Breast epithelium (tissue), 4 donors: ENCODE measurements at regions of chr19 and their contacts with region 1.

Region 1: DNA sequence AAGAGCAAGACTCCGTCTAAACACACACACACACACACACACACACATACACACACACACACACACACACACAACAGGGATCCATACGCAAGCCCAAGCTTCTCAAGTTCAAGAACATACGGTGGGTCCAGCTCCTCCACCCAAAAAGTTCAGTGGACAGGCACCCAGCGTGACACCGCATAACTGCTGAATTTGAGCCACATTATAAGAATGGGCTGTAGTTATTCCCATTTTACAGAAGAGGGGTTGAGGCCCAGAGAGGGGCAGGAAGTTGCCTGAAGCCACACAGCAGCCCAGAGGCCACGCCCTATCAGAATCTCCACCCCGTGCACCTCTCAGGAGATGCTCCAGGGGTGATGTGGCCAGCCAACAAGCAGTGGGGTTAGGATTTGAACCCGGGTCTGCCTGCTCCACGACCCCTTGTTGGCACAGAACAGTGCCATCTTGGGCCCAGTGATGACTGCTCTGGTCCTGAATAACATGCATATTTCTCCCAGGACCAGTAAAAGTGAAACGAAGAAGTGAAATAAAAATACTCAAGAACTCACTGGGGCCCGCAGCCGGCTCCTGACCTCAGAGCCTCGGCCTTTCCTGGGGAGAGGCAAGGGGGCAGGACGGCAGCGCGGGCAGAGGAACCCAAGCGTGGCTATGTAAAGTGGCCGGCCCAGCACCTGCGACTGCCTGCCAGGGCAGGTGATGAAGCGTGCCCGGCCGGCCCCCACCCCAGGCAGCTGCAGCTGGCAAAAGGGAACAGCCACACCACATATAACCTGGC is 61.9 kb downstream of the AP1M1 start:
- DNase-seq: no peak
- H3K4me3 ChIP-seq: no peak overlapping the region
- H3K27ac ChIP-seq: peak overlapping the region in 1 of 2 donors; percentile 87
- H3K4me1 ChIP-seq: no peaks in the 10 kb centered on the region
- H3K27me3 ChIP-seq: no peaks in the 10 kb centered on the region
- CTCF ChIP-seq: no peak
- POLR2A ChIP-seq: no peak

Region 2: DNA sequence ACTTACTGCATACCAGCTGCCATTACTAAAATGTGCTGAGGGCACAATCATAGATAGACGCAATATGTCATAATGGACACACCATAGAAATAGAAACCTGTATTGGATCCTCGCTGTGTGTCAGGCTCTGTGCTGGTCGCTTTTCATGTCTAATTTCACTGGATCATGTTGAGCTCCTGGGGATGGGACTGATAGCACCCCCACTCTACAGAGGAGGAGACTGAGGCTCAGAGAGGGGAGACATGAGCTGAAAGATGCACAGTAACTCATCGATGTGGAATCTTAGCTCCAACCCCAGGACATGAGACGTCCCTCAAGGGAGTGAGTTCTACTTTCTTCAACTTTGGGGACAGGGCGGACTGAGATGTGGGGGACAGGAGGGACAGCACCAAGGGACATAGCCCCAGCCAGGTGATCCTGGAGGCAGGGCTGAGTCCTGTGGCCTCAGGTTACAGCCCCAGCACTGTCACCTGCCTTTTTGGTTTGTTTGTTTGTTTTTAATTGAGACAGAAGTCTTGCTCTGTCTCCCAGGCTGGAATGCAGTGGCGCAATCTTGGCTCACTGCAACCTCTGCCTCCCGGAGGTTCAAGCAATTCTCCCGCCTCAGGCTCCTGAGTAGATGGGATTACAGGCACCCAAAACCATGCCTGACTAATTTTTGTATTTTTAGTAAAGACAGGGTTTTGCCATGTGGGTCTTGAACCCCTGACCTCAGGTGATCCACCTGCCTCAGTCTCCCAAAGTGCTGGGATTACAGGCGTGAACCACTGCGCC is 1757.1 kb before region 1 on chr19:
- intact Hi-C with region 1: loop called (anchors 5 kb)
- DNase-seq: peak in 1 of 2 donors; percentile 74
- H3K4me3 ChIP-seq: no peak overlapping the region
- H3K27ac ChIP-seq: peak overlapping the region; percentile 45 to 64
- H3K4me1 ChIP-seq: peaks cover 0 to 3% of the 10 kb centered on the region in 2 donors
- H3K27me3 ChIP-seq: no peaks in the 10 kb centered on the region
- CTCF ChIP-seq: no peak
- POLR2A ChIP-seq: no peak

Region 3: DNA sequence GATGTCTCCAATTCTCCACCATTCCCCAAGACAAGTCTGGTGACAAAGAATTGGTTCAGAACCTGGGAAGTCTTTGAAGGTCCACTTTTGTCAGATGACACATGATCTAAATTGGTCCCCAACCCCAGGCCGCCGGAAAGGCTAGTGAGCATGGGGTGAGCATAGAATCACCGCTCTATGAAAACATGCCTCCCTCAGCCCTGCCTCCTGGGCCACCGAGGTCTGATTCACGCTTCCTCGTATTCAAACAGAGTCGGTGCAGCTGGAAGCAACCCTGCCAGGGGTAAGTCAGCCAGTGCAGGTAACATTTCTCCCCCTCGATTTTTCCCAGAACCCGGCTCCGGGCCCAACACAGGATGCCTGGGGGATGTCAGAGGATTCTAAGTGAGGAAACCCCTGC is 31.1 kb after region 1 on chr19:
- intact Hi-C with region 1: loop called (anchors 1 kb)
- DNase-seq: no peak
- H3K4me3 ChIP-seq: no peak overlapping the region
- H3K27ac ChIP-seq: peak overlapping the region in 1 of 2 donors; percentile 49
- H3K4me1 ChIP-seq: no peaks in the 10 kb centered on the region
- H3K27me3 ChIP-seq: no peaks in the 10 kb centered on the region
- CTCF ChIP-seq: no peak
- POLR2A ChIP-seq: no peak

Region 4: DNA sequence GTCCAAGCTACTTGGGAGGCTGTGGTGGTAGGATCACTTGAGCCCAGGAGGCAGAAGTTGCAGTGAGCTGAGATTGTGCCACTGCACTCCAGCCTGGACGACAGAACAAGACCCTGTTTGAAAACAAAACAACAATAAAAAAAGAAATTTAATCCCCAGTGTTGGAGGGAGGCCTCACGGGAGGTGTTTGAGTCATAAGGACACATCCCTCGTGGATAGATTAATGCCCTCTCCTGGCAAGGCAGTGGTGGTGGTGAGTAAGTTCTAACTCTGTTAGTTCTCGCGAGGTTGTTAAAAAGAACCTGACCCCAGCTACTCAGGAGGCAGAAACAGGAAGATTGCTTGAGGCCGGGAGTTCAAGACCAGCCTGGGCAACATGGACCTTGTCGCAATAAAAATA is 542.0 kb after region 1 on chr19:
- intact Hi-C with region 1: no loop called
- DNase-seq: no peak
- H3K4me3 ChIP-seq: no peak overlapping the region
- H3K27ac ChIP-seq: no peak overlapping the region
- H3K4me1 ChIP-seq: no peaks in the 10 kb centered on the region
- H3K27me3 ChIP-seq: no peaks in the 10 kb centered on the region
- CTCF ChIP-seq: no peak
- POLR2A ChIP-seq: no peak